ENCODE measurements at regions of chr6 and their contacts with region 1.

Region 1: DNA sequence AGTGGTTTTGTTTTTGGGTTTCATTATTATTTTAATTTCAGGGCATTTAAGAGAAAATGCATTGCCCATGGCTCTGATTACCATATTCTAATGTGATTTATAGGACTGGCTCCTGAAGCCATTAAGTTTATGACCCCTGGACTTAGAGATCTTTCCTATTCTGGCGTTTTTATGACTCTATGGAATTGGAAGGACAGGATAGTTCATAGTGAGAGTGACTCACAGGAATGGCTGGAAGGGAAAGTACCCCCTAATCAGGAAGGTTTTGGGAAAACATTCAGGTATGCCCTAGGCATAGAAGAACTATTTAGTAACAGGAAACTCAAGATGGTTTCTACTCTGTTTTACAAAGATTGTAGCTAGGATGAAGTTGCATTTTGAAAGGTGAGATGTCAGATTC is 108.6 kb upstream of the SLC2A12 start:
- DNase-seq: no peak
- ATAC-seq: no peak
- H3K4me3 Mint-ChIP-seq: no peak overlapping the region
- H3K27ac Mint-ChIP-seq: no peak overlapping the region
- H3K4me1 Mint-ChIP-seq: no peaks in the 10 kb centered on the region
- H3K27me3 Mint-ChIP-seq: no peaks in the 10 kb centered on the region

Region 2: DNA sequence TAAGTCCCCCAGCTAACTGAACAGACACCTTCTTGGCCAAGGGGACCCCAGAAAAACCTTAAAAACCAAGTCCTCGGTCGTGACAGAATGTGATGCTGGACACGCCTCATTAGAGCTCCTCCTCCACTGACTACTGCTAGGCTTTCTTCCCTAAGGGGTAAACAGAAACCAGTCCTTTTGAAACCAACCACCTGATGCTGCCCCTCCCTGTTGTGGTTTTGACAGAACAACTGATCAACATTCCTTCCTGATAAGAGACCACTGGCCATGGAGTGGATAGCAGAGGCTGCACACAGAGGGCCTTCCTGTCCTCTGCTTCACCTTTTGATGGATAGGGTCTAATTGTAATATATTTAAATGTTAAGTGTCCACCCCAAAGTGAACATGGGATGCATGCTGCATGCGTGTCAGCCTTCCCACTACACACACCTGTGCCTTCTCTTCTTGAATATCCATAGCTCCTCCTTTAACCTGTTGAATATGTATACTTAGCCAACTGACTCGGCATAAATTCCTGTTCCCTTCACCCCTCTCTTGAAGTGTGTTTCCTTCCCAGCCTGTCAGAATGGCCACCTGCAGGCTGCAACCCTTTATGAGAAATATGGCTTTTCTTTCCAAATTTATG is 80.8 kb before region 1 on chr6:
- CTCF ChIA-PET with region 1: no interaction called
- POLR2A ChIA-PET with region 1: no interaction called
- DNase-seq: peak; percentile 22
- ATAC-seq: peak; percentile 15
- H3K4me3 Mint-ChIP-seq: no peak overlapping the region
- H3K27ac Mint-ChIP-seq: no peak overlapping the region
- H3K4me1 Mint-ChIP-seq: peaks cover 26% of the 10 kb centered on the region
- H3K27me3 Mint-ChIP-seq: peaks cover 8% of the 10 kb centered on the region

Region 3: DNA sequence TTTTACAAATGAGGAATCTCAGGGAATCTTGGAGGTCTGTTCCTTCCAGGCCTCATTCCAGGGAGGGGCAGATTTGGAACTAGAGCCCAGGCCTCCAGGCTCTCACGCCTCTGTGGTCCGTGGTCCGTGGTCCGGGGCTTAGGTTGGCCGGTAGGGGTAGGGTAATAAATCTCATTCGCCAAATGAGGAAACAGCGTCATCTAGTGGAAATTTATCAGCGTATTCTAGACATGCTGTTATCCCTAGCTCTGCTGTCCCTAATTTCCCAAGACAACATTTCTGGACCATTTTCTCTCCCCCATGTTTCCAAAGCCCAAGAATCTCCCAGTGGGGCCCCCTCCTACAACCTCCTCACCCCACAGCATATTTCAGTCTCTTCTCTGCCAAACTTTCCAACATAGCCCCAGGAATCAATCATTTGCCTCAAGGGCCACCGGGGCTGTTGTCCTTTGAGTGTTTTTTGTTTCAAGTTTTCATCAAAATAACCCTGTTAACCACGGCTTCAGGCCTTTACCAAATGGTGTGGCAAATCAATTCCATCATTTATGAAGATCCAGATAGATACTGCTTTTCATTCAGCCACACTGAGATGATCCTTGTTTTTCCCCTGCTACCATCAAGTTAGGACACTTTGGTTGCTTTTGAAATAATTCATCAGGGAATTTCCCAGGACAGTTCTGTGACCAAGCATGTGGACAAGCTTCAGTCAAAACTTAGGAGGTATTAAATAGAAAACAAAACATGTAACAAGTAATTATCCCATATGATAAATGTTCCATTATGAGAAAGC is 662.1 kb after region 1 on chr6:
- CTCF ChIA-PET with region 1: interaction called, 43 read pairs
- POLR2A ChIA-PET with region 1: no interaction called
- DNase-seq: peak; percentile 45
- ATAC-seq: peak; percentile 90
- H3K4me3 Mint-ChIP-seq: no peak overlapping the region
- H3K27ac Mint-ChIP-seq: no peak overlapping the region
- H3K4me1 Mint-ChIP-seq: no peaks in the 10 kb centered on the region
- H3K27me3 Mint-ChIP-seq: peaks cover 6% of the 10 kb centered on the region